CD4-positive, alpha-beta memory T cell (primary cell): ENCODE measurements at regions of chr1 and their contacts with region 1.

Region 1: GRCh38 chr1:27300341-27301051 is 21.5 kb upstream of the TMEM222 start:
- DNase-seq: peak; percentile 66 to 79 (median 76)
- H3K4me3 ChIP-seq: no peak overlapping the region
- H3K4me3 Mint-ChIP-seq: no peak overlapping the region
- H3K27ac ChIP-seq: no peak overlapping the region
- H3K27ac Mint-ChIP-seq: peak overlapping the region in 1 of 7 donors; percentile 43
- H3K4me1 ChIP-seq: no peaks in the 10 kb centered on the region
- H3K4me1 Mint-ChIP-seq: peaks cover 0 to 2% (median 1%) of the 10 kb centered on the region in 4 donors
- H3K27me3 ChIP-seq: no peaks in the 10 kb centered on the region
- H3K27me3 Mint-ChIP-seq: no peaks in the 10 kb centered on the region

Region 2: GRCh38 chr1:27102707-27103491 is 197.6 kb before region 1 on chr1:
- CTCF ChIA-PET with region 1: interaction called, 17 read pairs
- POLR2A ChIA-PET with region 1: no interaction called
- intact Hi-C with region 1: no loop called
- DNase-seq: peak; percentile 67 to 79 (median 71)
- H3K4me3 ChIP-seq: no peak overlapping the region
- H3K4me3 Mint-ChIP-seq: peak overlapping the region in 1 of 8 donors; percentile 26
- H3K27ac ChIP-seq: no peak overlapping the region
- H3K27ac Mint-ChIP-seq: peak overlapping the region in 4 of 7 donors; percentile 24 to 71 (median 38)
- H3K4me1 ChIP-seq: no peaks in the 10 kb centered on the region
- H3K4me1 Mint-ChIP-seq: peaks cover 0 to 4% (median under 1%) of the 10 kb centered on the region in 4 donors
- H3K27me3 ChIP-seq: no peaks in the 10 kb centered on the region
- H3K27me3 Mint-ChIP-seq: no peaks in the 10 kb centered on the region

Region 3: GRCh38 chr1:27284425-27285273 is 15.8 kb before region 1 on chr1:
- CTCF ChIA-PET with region 1: interaction called, 49 read pairs
- POLR2A ChIA-PET with region 1: no interaction called
- intact Hi-C with region 1: no loop called
- DNase-seq: peak; percentile 77 to 85 (median 81)
- H3K4me3 ChIP-seq: no peak overlapping the region
- H3K4me3 Mint-ChIP-seq: no peak overlapping the region
- H3K27ac ChIP-seq: no peak overlapping the region
- H3K27ac Mint-ChIP-seq: peak overlapping the region in 4 of 7 donors; percentile 42 to 73 (median 62)
- H3K4me1 ChIP-seq: no peaks in the 10 kb centered on the region
- H3K4me1 Mint-ChIP-seq: peaks cover 0 to 6% (median under 1%) of the 10 kb centered on the region in 4 donors
- H3K27me3 ChIP-seq: no peaks in the 10 kb centered on the region
- H3K27me3 Mint-ChIP-seq: no peaks in the 10 kb centered on the region

Region 4: GRCh38 chr1:27321813-27322577 is 21.5 kb after region 1 on chr1 and contains the start of gene TMEM222:
- CTCF ChIA-PET with region 1: interaction called, 15 read pairs
- POLR2A ChIA-PET with region 1: interaction called, 4 read pairs
- intact Hi-C with region 1: no loop called
- DNase-seq: peak; percentile 97
- H3K4me3 ChIP-seq: peak within 1 kb of the TSS; percentile 89 to 97
- H3K4me3 Mint-ChIP-seq: peak within 1 kb of the TSS; percentile 95 to 99 (median 98)
- H3K27ac ChIP-seq: peak within 1 kb of the TSS; percentile 95
- H3K27ac Mint-ChIP-seq: peak within 1 kb of the TSS; percentile 95 to 98 (median 96)
- H3K4me1 ChIP-seq: peaks cover 53% of the 10 kb centered on the region
- H3K4me1 Mint-ChIP-seq: peaks cover 27 to 58% (median 44%) of the 10 kb centered on the region in 4 donors
- H3K27me3 ChIP-seq: peaks cover 5% of the 10 kb centered on the region
- H3K27me3 Mint-ChIP-seq: peaks cover 3 to 4% of the 10 kb centered on the region in 2 donors
- total RNA-seq, gene TMEM222: 44.4 to 45.4 TPM

Region 5: GRCh38 chr1:27357281-27358037 is 57.0 kb after region 1 on chr1:
- CTCF ChIA-PET with region 1: interaction called, 28 read pairs
- POLR2A ChIA-PET with region 1: interaction called, 5 read pairs
- intact Hi-C with region 1: no loop called
- DNase-seq: peak; percentile 80 to 84 (median 83)
- H3K4me3 ChIP-seq: peak overlapping the region; percentile 44 to 71
- H3K4me3 Mint-ChIP-seq: peak overlapping the region; percentile 74 to 85 (median 80)
- H3K27ac ChIP-seq: peak overlapping the region; percentile 57
- H3K27ac Mint-ChIP-seq: peak overlapping the region; percentile 72 to 90 (median 84)
- H3K4me1 ChIP-seq: peaks cover 47% of the 10 kb centered on the region
- H3K4me1 Mint-ChIP-seq: peaks cover 18 to 56% (median 40%) of the 10 kb centered on the region in 4 donors
- H3K27me3 ChIP-seq: no peaks in the 10 kb centered on the region
- H3K27me3 Mint-ChIP-seq: no peaks in the 10 kb centered on the region

Region 6: GRCh38 chr1:27392096-27392777 is 91.7 kb after region 1 on chr1 and contains the start of gene GPR3:
- CTCF ChIA-PET with region 1: interaction called, 325 read pairs
- POLR2A ChIA-PET with region 1: interaction called, 15 read pairs
- intact Hi-C with region 1: loop called (anchors 1 kb)
- DNase-seq: peak; percentile 88 to 92 (median 89)
- H3K4me3 ChIP-seq: peak within 1 kb of the TSS; percentile 17 to 68
- H3K4me3 Mint-ChIP-seq: peak within 1 kb of the TSS; percentile 79 to 93 (median 84)
- H3K27ac ChIP-seq: peak within 1 kb of the TSS; percentile 42
- H3K27ac Mint-ChIP-seq: peak within 1 kb of the TSS; percentile 58 to 97 (median 94)
- H3K4me1 ChIP-seq: peaks cover 26% of the 10 kb centered on the region
- H3K4me1 Mint-ChIP-seq: peaks cover 11 to 30% (median 17%) of the 10 kb centered on the region in 4 donors
- H3K27me3 ChIP-seq: no peaks in the 10 kb centered on the region
- H3K27me3 Mint-ChIP-seq: peaks cover 1 to 4% of the 10 kb centered on the region in 2 donors
- total RNA-seq, gene GPR3: not detected

Region 7: DNA sequence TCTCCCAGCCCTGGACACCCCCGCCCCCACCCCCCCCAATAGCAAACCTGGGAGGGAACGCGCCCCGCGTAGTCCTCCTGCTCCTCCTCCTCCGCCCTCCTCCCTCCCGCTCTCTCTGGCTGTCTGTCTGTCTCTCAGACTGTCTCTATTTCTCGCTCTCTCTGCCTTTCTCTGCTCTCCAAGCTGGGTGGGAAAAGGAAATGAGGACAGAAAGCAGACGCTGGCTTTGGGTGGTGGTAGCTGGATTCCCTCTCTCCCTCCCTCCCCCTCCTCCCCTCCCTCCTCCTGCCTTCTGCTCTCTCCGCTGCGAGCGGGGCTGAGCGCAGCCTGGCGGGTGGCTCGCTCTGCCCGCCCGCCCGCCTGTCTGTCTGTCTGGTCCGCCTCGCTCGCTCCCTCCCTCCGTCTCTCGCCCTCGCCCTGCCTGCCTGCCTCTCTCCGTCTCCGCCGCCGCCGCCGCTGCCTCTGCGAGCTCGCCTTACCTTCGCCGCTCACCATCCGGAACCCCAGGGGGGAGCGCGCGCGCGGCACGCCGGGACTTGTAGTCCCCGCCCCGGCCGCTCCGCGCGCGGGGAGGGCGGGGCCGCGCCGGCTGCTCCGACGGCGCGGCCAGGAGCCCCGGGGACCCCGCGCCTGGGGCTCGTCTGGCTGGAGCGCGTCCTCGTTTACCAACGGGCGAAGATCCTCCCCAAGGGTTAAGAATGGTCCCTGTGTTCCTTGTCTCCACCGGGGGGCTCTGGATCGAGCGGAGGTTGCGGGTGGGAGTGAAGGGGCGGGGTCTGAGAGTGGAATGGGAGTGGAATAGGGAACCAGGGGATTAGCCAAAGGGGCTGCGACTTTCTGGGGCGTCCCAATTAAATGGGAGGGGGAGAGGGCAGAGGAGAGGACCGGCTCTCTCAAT is 303.4 kb after region 1 on chr1 and contains the start of gene AHDC1:
- CTCF ChIA-PET with region 1: interaction called, 80 read pairs
- POLR2A ChIA-PET with region 1: interaction called, 3 read pairs
- intact Hi-C with region 1: loop called (anchors 2 kb)
- DNase-seq: peak; percentile 90 to 94 (median 91)
- H3K4me3 ChIP-seq: peak within 1 kb of the TSS; percentile 29 to 79
- H3K4me3 Mint-ChIP-seq: peak within 1 kb of the TSS; percentile 86 to 98 (median 92)
- H3K27ac ChIP-seq: peak within 1 kb of the TSS; percentile 63
- H3K27ac Mint-ChIP-seq: peak within 1 kb of the TSS; percentile 88 to 94 (median 92)
- H3K4me1 ChIP-seq: peaks cover 54% of the 10 kb centered on the region
- H3K4me1 Mint-ChIP-seq: peaks cover 16 to 66% (median 40%) of the 10 kb centered on the region in 4 donors
- H3K27me3 ChIP-seq: no peaks in the 10 kb centered on the region
- H3K27me3 Mint-ChIP-seq: no peaks in the 10 kb centered on the region
- total RNA-seq, gene AHDC1: 18.4 to 19.2 TPM